ENCODE measurements at regions of chr19 and their contacts with region 1.

Region 1: GRCh38 chr19:35931161-35931873 is 4.9 kb upstream of the LRFN3 start:
- DNase-seq: peak; percentile 100
- H3K4me3 ChIP-seq: peak overlapping the region; percentile 11 to 71 (median 31)
- H3K4me3 Mint-ChIP-seq: peak overlapping the region; percentile 68 to 72
- H3K27ac ChIP-seq: peak overlapping the region; percentile 73 to 77
- H3K27ac Mint-ChIP-seq: peak overlapping the region; percentile 92 to 98 (median 95)
- H3K4me1 ChIP-seq: peaks cover 44 to 53% of the 10 kb centered on the region in 2 donors
- H3K4me1 Mint-ChIP-seq: peaks cover 46% of the 10 kb centered on the region
- H3K27me3 ChIP-seq: peaks cover 7 to 17% of the 10 kb centered on the region in 2 donors
- H3K27me3 Mint-ChIP-seq: peaks cover 18 to 26% (median 20%) of the 10 kb centered on the region in 3 donors
- CTCF ChIP-seq: peak; percentile 86

Region 2: GRCh38 chr19:35693830-35694599 is 237.3 kb before region 1 on chr19:
- intact Hi-C with region 1: loop called in 1 of 2 experiments (anchors 5 kb)
- DNase-seq: peak; percentile 72 to 82 (median 78)
- H3K4me3 ChIP-seq: no peak overlapping the region
- H3K4me3 Mint-ChIP-seq: no peak overlapping the region
- H3K27ac ChIP-seq: no peak overlapping the region
- H3K27ac Mint-ChIP-seq: peak overlapping the region in 1 of 7 donors; percentile 40
- H3K4me1 ChIP-seq: no peaks in the 10 kb centered on the region
- H3K4me1 Mint-ChIP-seq: no peaks in the 10 kb centered on the region
- H3K27me3 ChIP-seq: no peaks in the 10 kb centered on the region
- H3K27me3 Mint-ChIP-seq: peaks cover 2 to 10% (median 8%) of the 10 kb centered on the region in 3 donors
- CTCF ChIP-seq: peak; percentile 95

Region 3: DNA sequence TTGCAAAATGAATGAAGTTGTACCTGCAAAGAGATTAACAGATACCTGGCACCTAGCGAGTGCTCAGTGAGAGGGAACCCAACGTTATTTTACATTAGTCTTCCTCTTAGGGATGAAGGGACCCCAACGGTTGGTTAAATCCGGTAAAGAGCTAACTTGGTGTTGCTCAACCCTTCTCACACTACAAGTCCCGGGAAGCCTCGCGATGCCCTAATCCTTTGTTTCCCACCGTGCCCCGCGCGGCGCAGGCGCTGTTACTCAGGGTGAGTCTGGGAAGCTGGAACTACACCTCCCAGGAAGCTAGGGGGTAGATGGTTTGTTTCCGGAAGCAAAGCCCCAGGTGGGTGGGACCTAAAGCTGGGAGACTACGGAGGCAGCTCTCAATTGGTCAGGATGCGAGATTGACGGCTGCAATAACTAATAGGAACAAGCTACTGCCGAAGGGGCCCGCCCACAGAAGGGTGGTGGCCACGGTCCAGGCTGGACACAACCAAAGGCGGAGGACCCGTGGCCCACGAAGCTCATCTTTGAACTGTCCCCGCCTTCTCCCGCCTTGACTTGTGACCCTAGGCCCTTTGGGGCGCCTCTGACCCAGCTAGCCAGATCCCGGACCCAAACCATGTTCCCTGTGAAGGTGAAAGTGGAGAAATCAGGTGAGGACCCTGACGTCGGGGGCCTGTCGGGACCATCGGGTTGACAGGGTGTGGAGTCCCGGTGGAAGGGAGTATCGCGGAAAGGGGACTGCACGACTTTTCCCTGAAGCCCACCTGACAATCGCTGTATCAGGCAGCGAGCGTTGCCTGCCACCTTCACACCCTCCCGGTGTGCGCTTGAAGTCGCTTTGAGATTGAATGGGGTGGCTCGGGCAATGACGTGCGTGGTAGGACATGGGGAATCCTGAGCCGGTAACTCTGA is 183.0 kb before region 1 on chr19 and contains the start of gene LIN37:
- intact Hi-C with region 1: loop called in 1 of 2 experiments (anchors 2 kb)
- DNase-seq: peak; percentile 99 to 100 (median 99)
- H3K4me3 ChIP-seq: peak within 1 kb of the TSS; percentile 64 to 96 (median 87)
- H3K4me3 Mint-ChIP-seq: peak within 1 kb of the TSS; percentile 90 to 93
- H3K27ac ChIP-seq: peak within 1 kb of the TSS; percentile 11 to 71
- H3K27ac Mint-ChIP-seq: peak within 1 kb of the TSS; percentile 84 to 94 (median 91)
- H3K4me1 ChIP-seq: peaks cover 37 to 50% of the 10 kb centered on the region in 2 donors
- H3K4me1 Mint-ChIP-seq: peaks cover 36% of the 10 kb centered on the region
- H3K27me3 ChIP-seq: no peaks in the 10 kb centered on the region
- H3K27me3 Mint-ChIP-seq: peaks cover 0 to 3% (median 0%) of the 10 kb centered on the region in 3 donors
- CTCF ChIP-seq: no peak
- polyA plus RNA-seq, gene LIN37: 5.6 to 28.6 (median 7.2) TPM

Region 4: GRCh38 chr19:35882114-35882832 is 49.0 kb before region 1 on chr19:
- intact Hi-C with region 1: loop called (anchors 1 kb)
- DNase-seq: peak; percentile 59 to 66 (median 63)
- H3K4me3 ChIP-seq: no peak overlapping the region
- H3K4me3 Mint-ChIP-seq: no peak overlapping the region
- H3K27ac ChIP-seq: no peak overlapping the region
- H3K27ac Mint-ChIP-seq: peak overlapping the region in 1 of 7 donors; percentile 68
- H3K4me1 ChIP-seq: peaks cover 0 to 5% of the 10 kb centered on the region in 2 donors
- H3K4me1 Mint-ChIP-seq: peaks cover 12% of the 10 kb centered on the region
- H3K27me3 ChIP-seq: peaks cover 0 to 16% of the 10 kb centered on the region in 2 donors
- H3K27me3 Mint-ChIP-seq: peaks cover 17 to 24% (median 18%) of the 10 kb centered on the region in 3 donors
- CTCF ChIP-seq: peak; percentile 76

Region 5: GRCh38 chr19:35899547-35900214 is 31.6 kb before region 1 on chr19:
- intact Hi-C with region 1: loop called (anchors 1 to 2 kb)
- DNase-seq: peak; percentile 77 to 96 (median 89)
- H3K4me3 ChIP-seq: peak overlapping the region; percentile 80 to 99 (median 97)
- H3K4me3 Mint-ChIP-seq: peak overlapping the region; percentile 97 to 98
- H3K27ac ChIP-seq: peak overlapping the region; percentile 95 to 98
- H3K27ac Mint-ChIP-seq: peak overlapping the region; percentile 96 to 100 (median 100)
- H3K4me1 ChIP-seq: peaks cover 54 to 65% of the 10 kb centered on the region in 2 donors
- H3K4me1 Mint-ChIP-seq: peaks cover 54% of the 10 kb centered on the region
- H3K27me3 ChIP-seq: no peaks in the 10 kb centered on the region
- H3K27me3 Mint-ChIP-seq: peaks cover 0 to 10% (median 0%) of the 10 kb centered on the region in 3 donors
- CTCF ChIP-seq: no peak

Region 6: DNA sequence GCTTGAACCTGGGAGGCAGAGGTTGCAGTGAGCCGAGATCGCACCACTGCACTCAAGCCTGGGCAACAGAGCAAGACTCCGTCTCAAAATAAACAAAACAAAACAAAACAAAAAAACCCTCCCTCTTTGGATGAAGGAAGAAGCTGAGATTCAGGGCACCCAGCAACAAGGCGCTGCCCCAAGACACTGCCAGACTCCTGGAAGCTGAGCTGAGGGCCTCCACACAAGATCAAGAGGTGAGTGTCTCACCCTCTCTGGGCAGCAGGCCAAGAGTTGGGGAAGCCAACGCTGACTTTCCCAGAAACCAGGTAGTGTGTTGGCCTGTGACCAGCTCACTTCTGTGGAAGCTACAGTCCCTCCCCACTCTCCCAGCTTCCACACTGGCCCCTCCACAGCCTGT is 19.5 kb before region 1 on chr19:
- intact Hi-C with region 1: loop called in 1 of 2 experiments (anchors 2 kb)
- DNase-seq: peak in 2 of 3 donors; percentile 26 to 53
- H3K4me3 ChIP-seq: no peak overlapping the region
- H3K4me3 Mint-ChIP-seq: no peak overlapping the region
- H3K27ac ChIP-seq: peak overlapping the region; percentile 59 to 73
- H3K27ac Mint-ChIP-seq: peak overlapping the region; percentile 55 to 98 (median 90)
- H3K4me1 ChIP-seq: peaks cover 77 to 96% of the 10 kb centered on the region in 2 donors
- H3K4me1 Mint-ChIP-seq: peaks cover 72% of the 10 kb centered on the region
- H3K27me3 ChIP-seq: no peaks in the 10 kb centered on the region
- H3K27me3 Mint-ChIP-seq: peaks cover 0 to 5% (median 0%) of the 10 kb centered on the region in 3 donors
- CTCF ChIP-seq: no peak

Measured in CD14-positive monocyte (primary cell).